HEK293 (cell line): ENCODE measurements at regions of chr7 and their contacts with region 1.

Region 1: DNA sequence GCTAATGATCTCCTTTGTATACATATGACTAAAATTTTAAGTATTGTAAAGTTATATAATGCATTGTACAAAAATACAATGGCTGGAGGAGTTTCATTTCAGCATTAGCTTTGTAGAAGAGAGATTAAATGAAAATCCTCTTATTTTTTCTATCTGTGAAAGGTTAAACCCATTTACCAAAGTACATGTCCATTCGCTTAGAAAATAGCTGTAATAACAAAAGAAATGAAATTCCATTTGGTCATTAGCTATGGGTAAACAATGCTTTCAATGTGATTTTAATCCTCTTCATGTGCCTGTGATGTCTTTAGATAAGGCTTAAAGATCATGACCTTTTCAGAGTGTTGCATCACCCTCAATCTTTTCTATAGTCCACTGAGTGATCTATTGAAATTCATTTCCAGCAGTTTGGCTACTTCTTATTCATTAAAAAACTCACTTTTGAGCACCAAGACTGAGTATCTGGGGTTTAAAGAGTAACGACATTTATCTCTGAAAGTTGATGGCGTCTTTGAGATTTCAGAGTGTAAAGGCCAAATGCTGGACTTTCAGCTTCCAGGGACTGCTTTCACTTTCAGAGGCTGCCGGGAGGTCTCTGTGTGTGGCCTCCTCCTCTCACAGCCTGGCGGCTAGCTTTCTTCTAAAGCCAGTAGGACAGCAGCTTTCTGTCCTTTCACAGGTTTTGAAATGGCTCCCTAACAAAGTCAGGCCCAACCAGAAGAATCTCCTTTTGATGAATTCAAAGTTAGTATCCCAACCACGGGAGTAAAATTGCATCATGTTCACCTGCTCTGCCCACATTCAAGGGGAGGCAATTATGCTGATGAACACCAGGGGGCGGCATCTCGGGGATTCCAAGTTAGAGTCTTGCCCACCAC is 701.4 kb upstream of the COBL start:
- H3K4me3 ChIP-seq: no peak overlapping the region; the same call in 1 of the 2 replicates
- H3K27ac ChIP-seq: no peak overlapping the region
- H3K4me1 ChIP-seq: no peaks in the 10 kb centered on the region
- CTCF ChIP-seq: no peak

Region 2: DNA sequence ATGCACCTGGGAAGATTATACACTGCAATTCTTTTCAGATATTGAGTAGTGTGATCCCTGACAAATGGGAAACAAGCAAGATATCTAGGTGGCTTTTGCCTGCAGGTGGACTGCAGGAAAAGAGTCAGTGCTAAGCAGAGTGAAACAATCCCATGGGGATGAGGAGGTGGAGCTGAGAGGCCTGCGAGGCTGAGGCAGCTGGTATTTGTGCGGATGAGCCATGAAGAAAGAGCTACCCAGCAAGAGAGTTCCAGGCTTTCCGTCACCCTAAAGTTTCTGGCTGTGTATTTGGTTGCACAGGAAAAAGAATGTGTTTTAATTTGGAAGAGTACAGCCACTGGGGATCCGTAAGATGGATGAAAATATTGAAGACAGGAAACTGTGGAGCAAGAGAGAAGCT is 12.7 kb after region 1 on chr7:
- CTCF ChIA-PET with region 1: interaction called, 10 read pairs
- POLR2A ChIA-PET with region 1: no interaction called
- H3K4me3 ChIP-seq: no peak overlapping the region
- H3K27ac ChIP-seq: no peak overlapping the region
- H3K4me1 ChIP-seq: no peaks in the 10 kb centered on the region
- CTCF ChIP-seq: no peak